CD4-positive, alpha-beta memory T cell (primary cell): ENCODE measurements at regions of chr3 and their contacts with region 1.

Region 1: DNA sequence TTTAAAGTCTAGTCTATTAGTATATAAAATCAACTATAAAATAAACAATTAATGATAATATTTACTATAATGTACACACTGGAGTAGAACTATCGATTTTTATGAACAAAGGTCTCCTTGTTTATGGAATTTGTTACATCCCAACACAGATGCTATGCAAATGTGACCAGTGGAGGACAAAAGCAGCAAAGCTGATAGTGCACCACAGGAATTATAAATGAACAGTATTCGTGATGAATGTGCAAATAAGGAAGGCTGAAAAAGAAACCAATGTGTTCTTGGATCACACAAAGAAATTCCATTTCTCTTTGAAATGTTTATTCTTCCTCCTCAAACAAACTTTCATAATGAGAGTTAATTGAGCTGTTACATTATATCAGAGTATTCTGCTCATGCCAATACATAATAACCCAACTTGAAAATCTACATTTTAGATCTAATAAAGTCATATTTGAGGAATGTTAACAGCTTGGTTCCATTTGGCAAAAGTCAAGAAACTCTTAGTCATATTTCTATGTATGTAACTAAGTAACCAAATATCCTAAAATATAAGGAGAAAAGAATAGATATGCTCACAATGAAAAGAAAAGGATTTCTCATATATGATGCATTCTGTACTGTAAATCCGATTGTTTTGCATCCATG is 79.3 kb downstream of the NEK10 start:
- DNase-seq: no peak
- H3K4me3 ChIP-seq: no peak overlapping the region
- H3K4me3 Mint-ChIP-seq: no peak overlapping the region
- H3K27ac ChIP-seq: no peak overlapping the region
- H3K27ac Mint-ChIP-seq: no peak overlapping the region
- H3K4me1 ChIP-seq: no peaks in the 10 kb centered on the region
- H3K4me1 Mint-ChIP-seq: no peaks in the 10 kb centered on the region
- H3K27me3 ChIP-seq: no peaks in the 10 kb centered on the region
- H3K27me3 Mint-ChIP-seq: no peaks in the 10 kb centered on the region

Region 2: DNA sequence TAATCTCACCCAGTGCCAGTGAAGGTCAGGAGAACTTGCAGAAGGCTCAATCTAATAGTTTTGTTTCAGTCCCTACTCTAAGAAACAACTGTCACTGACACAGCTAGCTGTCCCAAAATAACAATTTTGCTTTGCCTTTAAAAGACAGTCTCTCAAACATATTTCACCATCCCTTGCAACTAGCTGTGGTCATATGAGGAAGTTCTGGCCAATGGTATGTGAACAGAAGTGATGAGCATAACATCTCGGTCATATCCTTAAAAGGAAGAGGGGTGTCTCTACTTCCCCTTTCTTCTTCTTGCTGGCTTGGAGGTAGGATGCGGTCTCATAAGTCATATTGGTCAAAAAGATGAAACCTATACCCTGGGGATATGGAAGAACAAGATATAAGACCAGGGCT is 118.8 kb before region 1 on chr3:
- CTCF ChIA-PET with region 1: no interaction called
- POLR2A ChIA-PET with region 1: no interaction called
- intact Hi-C with region 1: loop called (anchors 10 kb)
- DNase-seq: no peak
- H3K4me3 ChIP-seq: no peak overlapping the region
- H3K4me3 Mint-ChIP-seq: no peak overlapping the region
- H3K27ac ChIP-seq: no peak overlapping the region
- H3K27ac Mint-ChIP-seq: no peak overlapping the region
- H3K4me1 ChIP-seq: no peaks in the 10 kb centered on the region
- H3K4me1 Mint-ChIP-seq: no peaks in the 10 kb centered on the region
- H3K27me3 ChIP-seq: no peaks in the 10 kb centered on the region
- H3K27me3 Mint-ChIP-seq: peaks cover 0 to 3% of the 10 kb centered on the region in 2 donors

Region 3: GRCh38 chr3:27244374-27244773 is 45.5 kb before region 1 on chr3:
- CTCF ChIA-PET with region 1: no interaction called
- POLR2A ChIA-PET with region 1: no interaction called
- intact Hi-C with region 1: no loop called
- DNase-seq: no peak
- H3K4me3 ChIP-seq: no peak overlapping the region
- H3K4me3 Mint-ChIP-seq: no peak overlapping the region
- H3K27ac ChIP-seq: no peak overlapping the region
- H3K27ac Mint-ChIP-seq: no peak overlapping the region
- H3K4me1 ChIP-seq: no peaks in the 10 kb centered on the region
- H3K4me1 Mint-ChIP-seq: no peaks in the 10 kb centered on the region
- H3K27me3 ChIP-seq: no peaks in the 10 kb centered on the region
- H3K27me3 Mint-ChIP-seq: no peaks in the 10 kb centered on the region